CD8-positive, alpha-beta T cell (primary cell): ENCODE measurements at regions of chr22 and their contacts with region 1.

Region 1: GRCh38 chr22:41800348-41801146 is at the start of gene CCDC134:
- DNase-seq: peak; percentile 82 to 95 (median 92)
- ATAC-seq: peak; percentile 96
- H3K4me3 ChIP-seq: peak within 1 kb of the TSS; percentile 97 to 99
- H3K4me3 Mint-ChIP-seq: peak within 1 kb of the TSS; percentile 93
- H3K27ac ChIP-seq: peak within 1 kb of the TSS; percentile 90 to 92
- H3K27ac Mint-ChIP-seq: peak within 1 kb of the TSS; percentile 98
- H3K4me1 ChIP-seq: peaks cover 22% of the 10 kb centered on the region
- H3K4me1 Mint-ChIP-seq: peaks cover 38% of the 10 kb centered on the region
- H3K27me3 ChIP-seq: no peaks in the 10 kb centered on the region
- H3K27me3 Mint-ChIP-seq: no peaks in the 10 kb centered on the region
- CTCF ChIP-seq: no peak
- total RNA-seq, gene CCDC134: 19.1 to 22.5 TPM

Region 2: DNA sequence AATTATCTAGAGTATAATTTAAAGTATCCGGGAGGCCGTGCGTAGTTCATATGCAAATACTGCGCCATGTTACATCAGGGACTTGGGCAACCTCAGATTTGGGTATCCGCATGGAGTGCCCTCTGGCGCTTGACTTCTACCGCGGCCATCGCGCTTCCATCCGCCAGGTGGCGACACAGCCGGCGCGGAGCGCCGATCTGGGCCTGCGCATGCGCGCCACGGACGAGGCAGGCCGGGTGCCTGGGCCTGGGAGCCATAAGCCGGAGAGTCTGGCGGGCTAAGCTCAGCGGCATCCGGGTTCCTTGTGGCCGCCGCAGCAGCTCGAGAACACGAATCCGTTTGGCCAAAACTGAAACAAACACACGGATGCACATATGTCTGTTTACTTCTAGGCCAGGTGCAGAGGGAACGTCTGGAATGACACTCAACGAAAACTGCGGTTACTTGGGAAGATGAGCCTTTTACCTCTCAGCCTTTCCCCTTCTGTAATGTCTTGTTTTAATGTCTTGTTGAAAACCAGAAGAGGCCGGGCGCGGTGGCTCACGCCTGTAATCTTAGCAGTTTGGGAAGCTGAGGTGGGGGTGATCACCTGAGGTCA is 133.8 kb before region 1 on chr22:
- CTCF ChIA-PET with region 1: interaction called, 3 read pairs
- POLR2A ChIA-PET with region 1: interaction called, 11 read pairs
- intact Hi-C with region 1: loop called in 1 of 2 experiments (anchors 1 kb)
- DNase-seq: peak; percentile 89 to 97 (median 92)
- ATAC-seq: peak; percentile 94
- H3K4me3 ChIP-seq: peak overlapping the region; percentile 30 to 46
- H3K4me3 Mint-ChIP-seq: peak overlapping the region; percentile 84
- H3K27ac ChIP-seq: peak overlapping the region; percentile 57 to 85
- H3K27ac Mint-ChIP-seq: peak overlapping the region; percentile 96
- H3K4me1 ChIP-seq: peaks cover 9% of the 10 kb centered on the region
- H3K4me1 Mint-ChIP-seq: peaks cover 7% of the 10 kb centered on the region
- H3K27me3 ChIP-seq: no peaks in the 10 kb centered on the region
- H3K27me3 Mint-ChIP-seq: no peaks in the 10 kb centered on the region
- CTCF ChIP-seq: peak; percentile 94

Region 3: DNA sequence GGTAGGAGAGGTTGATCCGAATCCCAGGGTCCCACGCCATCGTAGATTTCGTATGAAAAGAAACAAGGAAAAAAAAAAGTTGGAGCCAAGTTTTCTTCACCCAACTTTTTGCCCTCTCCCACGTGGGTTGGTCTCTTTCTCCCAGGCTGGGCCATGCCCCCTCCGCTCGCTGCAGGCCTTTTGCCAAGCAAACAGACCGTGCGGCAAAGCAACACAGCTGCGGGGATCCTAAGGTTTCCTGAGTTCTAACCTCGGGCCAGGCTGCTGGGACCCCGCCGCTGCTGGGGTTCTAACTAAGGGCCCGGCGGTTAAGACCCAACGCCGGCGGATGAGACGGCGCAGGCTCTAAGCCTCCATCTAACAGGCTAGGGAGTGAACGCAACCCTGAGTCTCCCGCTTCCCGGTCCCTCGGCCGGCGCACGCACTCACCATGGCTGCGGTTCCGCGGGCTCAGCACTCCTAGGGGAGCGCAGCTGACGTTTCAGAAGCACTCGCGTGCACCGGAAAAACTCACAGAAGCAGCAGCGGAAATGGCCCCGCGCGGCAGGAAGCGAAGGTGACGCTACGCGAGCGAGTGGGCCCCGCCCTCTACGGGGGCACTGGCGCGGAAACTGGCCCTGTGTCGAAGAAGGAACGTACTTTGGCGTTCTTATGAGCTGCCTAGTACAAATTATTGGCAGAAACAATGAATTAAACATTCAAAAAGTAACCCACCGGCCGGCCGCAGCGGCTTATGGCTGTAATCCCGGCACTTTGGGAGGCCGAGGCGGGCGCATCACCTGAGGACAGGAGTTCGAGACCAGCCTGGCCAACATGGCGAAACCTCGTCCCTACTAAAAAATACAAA is 112.0 kb before region 1 on chr22 and contains the start of gene SNU13:
- CTCF ChIA-PET with region 1: no interaction called
- POLR2A ChIA-PET with region 1: interaction called, 11 read pairs
- intact Hi-C with region 1: loop called in 1 of 2 experiments (anchors 5 kb)
- DNase-seq: peak; percentile 84 to 97 (median 93)
- ATAC-seq: peak; percentile 92
- H3K4me3 ChIP-seq: peak within 1 kb of the TSS; percentile 90 to 96
- H3K4me3 Mint-ChIP-seq: peak within 1 kb of the TSS; percentile 90
- H3K27ac ChIP-seq: peak within 1 kb of the TSS; percentile 97
- H3K27ac Mint-ChIP-seq: peak within 1 kb of the TSS; percentile 95
- H3K4me1 ChIP-seq: peaks cover 17% of the 10 kb centered on the region
- H3K4me1 Mint-ChIP-seq: peaks cover 30% of the 10 kb centered on the region
- H3K27me3 ChIP-seq: no peaks in the 10 kb centered on the region
- H3K27me3 Mint-ChIP-seq: no peaks in the 10 kb centered on the region
- CTCF ChIP-seq: no peak
- total RNA-seq, gene SNU13: 158 to 173 TPM

Region 4: GRCh38 chr22:41746567-41747400 is 53.8 kb before region 1 on chr22:
- CTCF ChIA-PET with region 1: interaction called, 27 read pairs
- POLR2A ChIA-PET with region 1: interaction called, 11 read pairs
- intact Hi-C with region 1: loop called (anchors 1 to 5 kb)
- DNase-seq: peak; percentile 3 to 78 (median 55)
- ATAC-seq: peak; percentile 71
- H3K4me3 ChIP-seq: no peak overlapping the region
- H3K4me3 Mint-ChIP-seq: no peak overlapping the region
- H3K27ac ChIP-seq: no peak overlapping the region
- H3K27ac Mint-ChIP-seq: no peak overlapping the region
- H3K4me1 ChIP-seq: no peaks in the 10 kb centered on the region
- H3K4me1 Mint-ChIP-seq: peaks cover 4% of the 10 kb centered on the region
- H3K27me3 ChIP-seq: no peaks in the 10 kb centered on the region
- H3K27me3 Mint-ChIP-seq: peaks cover 13% of the 10 kb centered on the region
- CTCF ChIP-seq: peak; percentile 43

Region 5: DNA sequence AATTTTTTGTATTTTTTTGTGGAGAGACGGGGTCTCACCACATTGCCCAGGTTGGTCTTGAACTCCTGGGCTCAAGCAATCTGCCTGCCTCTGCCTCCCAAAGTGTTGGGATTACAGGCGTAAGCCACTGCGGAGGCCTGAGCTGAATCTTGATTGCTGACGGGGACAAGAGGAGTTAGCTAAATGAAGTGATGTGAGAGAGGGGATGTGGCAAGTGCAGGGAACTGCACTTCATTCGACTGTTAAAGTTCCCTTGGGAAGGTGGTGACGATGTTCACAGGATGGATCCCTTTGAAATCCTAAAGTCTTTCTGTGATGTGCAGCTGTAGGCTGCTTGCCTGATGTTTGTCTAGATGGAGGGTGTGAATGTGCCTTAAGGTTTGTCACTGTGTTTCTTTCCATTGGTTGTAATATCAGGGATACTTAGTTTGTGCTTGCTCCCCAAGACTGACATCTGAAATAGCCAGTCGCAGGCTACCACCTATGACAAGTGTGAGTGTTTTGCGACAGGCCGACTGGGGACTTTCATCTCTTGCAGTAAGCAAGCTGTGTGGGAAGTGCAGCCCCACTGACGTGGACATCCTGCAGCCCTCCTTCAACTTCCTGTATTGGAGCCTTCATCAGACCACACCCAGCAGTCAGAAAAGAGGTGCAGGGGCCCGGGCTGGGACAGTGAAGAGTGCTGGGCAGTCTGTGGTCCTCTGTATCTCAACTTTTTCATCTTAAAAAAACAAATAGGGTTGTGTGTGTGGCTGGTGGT is 19.6 kb before region 1 on chr22:
- CTCF ChIA-PET with region 1: interaction called, 45 read pairs
- POLR2A ChIA-PET with region 1: interaction called, 289 read pairs
- intact Hi-C with region 1: loop called (anchors 1 kb)
- DNase-seq: peak; percentile 77 to 99 (median 90)
- ATAC-seq: peak; percentile 92
- H3K4me3 ChIP-seq: peak overlapping the region; percentile 64 to 69
- H3K4me3 Mint-ChIP-seq: peak overlapping the region; percentile 89
- H3K27ac ChIP-seq: peak overlapping the region; percentile 86
- H3K27ac Mint-ChIP-seq: peak overlapping the region; percentile 99
- H3K4me1 ChIP-seq: peaks cover 32% of the 10 kb centered on the region
- H3K4me1 Mint-ChIP-seq: peaks cover 57% of the 10 kb centered on the region
- H3K27me3 ChIP-seq: no peaks in the 10 kb centered on the region
- H3K27me3 Mint-ChIP-seq: no peaks in the 10 kb centered on the region
- CTCF ChIP-seq: no peak

Region 6: DNA sequence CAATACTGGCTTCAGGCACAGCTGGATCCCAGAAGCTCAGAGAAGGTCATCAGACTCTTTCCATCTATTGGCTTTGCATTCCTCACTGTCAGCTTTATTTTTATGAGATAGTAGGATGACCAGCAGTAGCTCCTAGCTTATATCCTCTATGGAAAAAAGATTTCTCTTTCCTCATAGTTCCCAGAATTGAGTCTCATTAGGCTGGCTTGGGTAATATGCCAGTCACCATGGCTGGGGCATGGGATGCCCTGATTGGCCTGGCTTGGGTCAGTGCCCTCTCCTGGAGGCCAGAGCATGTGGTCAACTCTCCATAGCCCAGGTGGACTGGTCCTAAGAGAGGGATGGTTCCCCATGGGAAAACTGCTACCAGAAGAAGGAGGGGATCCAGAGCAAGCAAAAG is 14.1 kb before region 1 on chr22:
- CTCF ChIA-PET with region 1: interaction called, 45 read pairs
- POLR2A ChIA-PET with region 1: interaction called, 289 read pairs
- intact Hi-C with region 1: loop called (anchors 1 kb)
- DNase-seq: no peak
- ATAC-seq: no peak
- H3K4me3 ChIP-seq: no peak overlapping the region
- H3K4me3 Mint-ChIP-seq: no peak overlapping the region
- H3K27ac ChIP-seq: no peak overlapping the region
- H3K27ac Mint-ChIP-seq: peak overlapping the region; percentile 22
- H3K4me1 ChIP-seq: peaks cover 34% of the 10 kb centered on the region
- H3K4me1 Mint-ChIP-seq: peaks cover 64% of the 10 kb centered on the region
- H3K27me3 ChIP-seq: no peaks in the 10 kb centered on the region
- H3K27me3 Mint-ChIP-seq: no peaks in the 10 kb centered on the region
- CTCF ChIP-seq: no peak

Region 7: GRCh38 chr22:41857155-41857859 is 56.8 kb after region 1 on chr22:
- CTCF ChIA-PET with region 1: no interaction called
- POLR2A ChIA-PET with region 1: interaction called, 13 read pairs
- intact Hi-C with region 1: no loop called
- DNase-seq: peak; percentile 31 to 91 (median 72)
- ATAC-seq: peak; percentile 70
- H3K4me3 ChIP-seq: no peak overlapping the region
- H3K4me3 Mint-ChIP-seq: no peak overlapping the region
- H3K27ac ChIP-seq: peak overlapping the region; percentile 20 to 67
- H3K27ac Mint-ChIP-seq: peak overlapping the region; percentile 84
- H3K4me1 ChIP-seq: peaks cover 30% of the 10 kb centered on the region
- H3K4me1 Mint-ChIP-seq: peaks cover 59% of the 10 kb centered on the region
- H3K27me3 ChIP-seq: no peaks in the 10 kb centered on the region
- H3K27me3 Mint-ChIP-seq: no peaks in the 10 kb centered on the region
- CTCF ChIP-seq: peak; percentile 76